WTC11 (cell line): ENCODE measurements at regions of chrX and their contacts with region 1.

Region 1: GRCh38 chrX:71910986-71911730 is 513 bp downstream of the NHSL2 start:
- DNase-seq: peak; percentile 73
- ATAC-seq: peak; percentile 73
- H3K4me3 Mint-ChIP-seq: peak overlapping the region; percentile 73
- H3K27ac Mint-ChIP-seq: no peak overlapping the region
- H3K4me1 Mint-ChIP-seq: peaks cover 47% of the 10 kb centered on the region
- H3K27me3 Mint-ChIP-seq: no peaks in the 10 kb centered on the region
- CTCF ChIP-seq: no peak

Region 2: DNA sequence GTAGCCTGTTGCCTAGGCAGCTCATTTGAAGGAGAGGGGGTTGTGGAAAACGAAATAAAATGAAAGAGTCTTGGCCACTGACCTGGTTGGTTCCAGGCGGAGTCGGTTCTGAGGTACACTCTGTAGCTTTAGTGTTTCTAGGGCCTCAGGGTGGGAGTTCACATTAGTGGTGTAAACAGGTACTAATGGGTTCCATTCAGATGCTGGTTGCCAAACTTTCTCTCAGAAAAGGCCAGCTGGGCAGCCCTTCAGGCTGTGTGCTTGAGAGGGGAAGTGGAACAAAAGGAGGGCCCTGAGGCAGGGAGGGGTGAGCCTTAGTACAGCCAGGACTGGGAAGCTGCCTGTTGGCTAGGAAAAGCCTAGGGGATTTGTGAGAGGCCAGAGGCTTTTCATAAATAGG is 24.3 kb after region 1 on chrX:
- CTCF ChIA-PET with region 1: interaction called, 25 read pairs
- POLR2A ChIA-PET with region 1: interaction called, 5 read pairs
- DNase-seq: peak; percentile 41
- ATAC-seq: peak; percentile 97
- H3K4me3 Mint-ChIP-seq: peak overlapping the region; percentile 10; the same call in 1 of the 2 replicates
- H3K27ac Mint-ChIP-seq: peak overlapping the region; percentile 97
- H3K4me1 Mint-ChIP-seq: peaks cover 54% of the 10 kb centered on the region
- H3K27me3 Mint-ChIP-seq: no peaks in the 10 kb centered on the region
- CTCF ChIP-seq: no peak

Region 3: DNA sequence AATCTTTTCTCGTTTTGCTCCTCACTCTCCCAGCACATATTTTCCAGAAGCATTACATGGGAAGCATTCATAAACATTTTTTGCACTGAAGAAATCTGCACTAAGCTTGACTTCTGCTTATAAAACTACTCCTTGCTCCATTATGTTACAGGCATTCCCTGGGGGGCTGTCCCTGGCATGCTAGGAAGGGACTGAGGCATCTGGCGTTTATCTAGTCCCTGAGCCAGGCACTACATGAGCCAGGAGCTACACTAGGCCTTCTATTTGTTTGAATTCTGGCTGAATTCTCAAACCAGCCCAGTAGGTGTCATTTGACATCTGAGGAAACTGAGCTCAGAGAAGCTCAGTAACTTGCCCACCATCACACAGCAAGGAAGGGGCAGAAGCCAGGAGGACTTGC is 42.8 kb after region 1 on chrX:
- CTCF ChIA-PET with region 1: interaction called, 37 read pairs
- POLR2A ChIA-PET with region 1: interaction called, 24 read pairs
- DNase-seq: no peak
- ATAC-seq: no peak
- H3K4me3 Mint-ChIP-seq: no peak overlapping the region
- H3K27ac Mint-ChIP-seq: peak overlapping the region; percentile 91
- H3K4me1 Mint-ChIP-seq: peaks cover 77% of the 10 kb centered on the region
- H3K27me3 Mint-ChIP-seq: no peaks in the 10 kb centered on the region
- CTCF ChIP-seq: no peak

Region 4: DNA sequence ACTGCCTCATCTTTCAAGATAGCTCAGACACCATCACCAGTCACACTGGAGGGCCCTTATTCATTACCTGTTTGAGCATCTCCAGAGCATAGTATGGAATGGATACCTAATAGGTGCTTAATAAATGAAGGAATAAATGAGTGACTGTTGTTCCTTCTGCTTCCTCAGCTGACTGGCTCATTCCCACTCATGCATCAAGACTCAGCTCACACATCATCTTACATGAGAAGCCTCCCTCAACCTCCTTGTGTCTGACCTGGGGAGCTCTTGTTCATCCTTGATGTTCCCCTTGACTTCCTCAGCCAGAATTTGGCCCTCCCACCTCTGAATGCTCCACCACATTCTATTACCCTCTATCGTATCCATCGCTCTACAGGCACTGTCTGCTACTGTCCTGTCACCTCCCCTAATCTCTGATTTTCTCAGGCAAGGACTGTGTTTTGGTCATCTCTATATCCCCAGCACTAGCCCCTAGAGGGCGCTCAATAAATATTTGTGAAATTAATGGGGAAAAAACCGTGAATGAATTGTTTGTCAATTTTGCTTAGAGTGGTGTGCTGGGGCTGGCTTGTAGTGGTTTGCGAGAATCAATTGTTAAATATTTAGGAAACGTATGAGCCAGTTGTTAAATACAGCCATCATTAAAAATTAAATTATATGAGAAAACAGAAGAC is 87.8 kb after region 1 on chrX:
- CTCF ChIA-PET with region 1: interaction called, 47 read pairs
- POLR2A ChIA-PET with region 1: interaction called, 14 read pairs
- DNase-seq: no peak
- ATAC-seq: peak; percentile 45
- H3K4me3 Mint-ChIP-seq: no peak overlapping the region
- H3K27ac Mint-ChIP-seq: no peak overlapping the region
- H3K4me1 Mint-ChIP-seq: peaks cover 71% of the 10 kb centered on the region
- H3K27me3 Mint-ChIP-seq: peaks cover 3% of the 10 kb centered on the region; the same call in 1 of the 2 replicates
- CTCF ChIP-seq: 0 out of 2 replicates have a peak, but pooled peaks have one; percentile 32

Region 5: GRCh38 chrX:72003811-72004750 is 92.9 kb after region 1 on chrX:
- CTCF ChIA-PET with region 1: interaction called, 47 read pairs
- POLR2A ChIA-PET with region 1: interaction called, 9 read pairs
- DNase-seq: peak; percentile 73
- ATAC-seq: peak; percentile 90
- H3K4me3 Mint-ChIP-seq: peak overlapping the region; percentile 43
- H3K27ac Mint-ChIP-seq: peak overlapping the region; percentile 73
- H3K4me1 Mint-ChIP-seq: peaks cover 55% of the 10 kb centered on the region
- H3K27me3 Mint-ChIP-seq: no peaks in the 10 kb centered on the region; the same call in 1 of the 2 replicates
- CTCF ChIP-seq: no peak